Vagina (tissue), 2 donors: ENCODE measurements at regions of chr6 and their contacts with region 1.

Region 1: GRCh38 chr6:3057063-3057770 is 11.1 kb upstream of the RIPK1 start:
- DNase-seq: no peak
- H3K4me3 ChIP-seq: no peak overlapping the region
- H3K27ac ChIP-seq: no peak overlapping the region
- H3K4me1 ChIP-seq: peaks cover 25% of the 10 kb centered on the region
- H3K27me3 ChIP-seq: no peaks in the 10 kb centered on the region
- CTCF ChIP-seq: no peak
- POLR2A ChIP-seq: no peak

Region 2: DNA sequence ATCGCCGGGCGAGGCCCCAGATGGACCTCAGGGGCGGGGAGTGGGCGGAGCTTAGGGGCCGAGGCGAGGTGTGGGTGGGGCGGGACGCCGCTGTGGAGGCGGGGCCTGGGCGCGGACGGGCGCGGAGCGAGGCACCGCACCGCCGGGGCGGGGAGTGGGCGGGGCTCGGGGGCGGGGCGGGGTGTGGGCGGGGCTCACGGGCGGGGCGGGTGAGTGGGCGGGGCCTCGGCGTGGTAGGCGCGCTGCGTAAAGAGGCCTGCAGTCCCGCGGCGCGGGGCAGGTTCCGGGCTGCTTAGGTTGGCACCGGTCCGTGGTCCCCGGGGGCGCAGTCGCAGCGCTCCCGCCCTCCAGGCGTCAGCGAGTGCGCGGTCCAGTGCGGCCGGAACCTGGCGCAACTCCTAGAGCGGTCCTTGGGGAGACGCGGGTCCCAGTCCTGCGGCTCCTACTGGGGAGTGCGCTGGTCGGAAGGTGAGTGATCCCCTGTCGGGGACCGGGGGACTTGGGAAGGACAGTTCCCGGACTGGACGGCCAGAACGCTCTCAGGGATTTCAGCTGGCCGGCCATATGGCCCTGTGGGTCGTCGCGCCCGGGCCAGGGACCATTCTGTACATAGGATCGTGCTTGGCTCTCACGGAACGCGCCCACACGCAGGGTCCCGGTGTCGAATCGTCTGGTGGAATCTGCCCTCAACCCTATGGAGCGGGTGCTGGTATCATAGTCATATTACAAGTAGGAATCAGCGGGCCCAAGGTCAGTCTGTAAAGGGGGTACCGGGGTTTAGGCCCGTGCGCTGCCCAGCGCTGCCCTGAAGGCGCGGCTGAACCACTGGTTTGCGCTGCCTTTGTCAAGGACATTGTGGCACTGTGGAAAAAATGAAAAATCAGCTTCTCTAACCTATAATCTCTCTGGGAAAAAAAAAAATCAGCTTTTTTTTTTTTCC is 57.3 kb before region 1 on chr6 and contains the start of gene NQO2:
- intact Hi-C with region 1: loop called (anchors 5 kb)
- DNase-seq: no peak
- H3K4me3 ChIP-seq: peak within 1 kb of the TSS; percentile 88 to 95
- H3K27ac ChIP-seq: peak within 1 kb of the TSS; percentile 90
- H3K4me1 ChIP-seq: peaks cover 20% of the 10 kb centered on the region
- H3K27me3 ChIP-seq: no peaks in the 10 kb centered on the region
- CTCF ChIP-seq: no peak
- POLR2A ChIP-seq: peak; percentile 40 to 94
- total RNA-seq, gene NQO2: 11.8 TPM